Activated naive CD4-positive, alpha-beta T cell treated with anti-CD3 and anti-CD28 coated beads for 36 hours (primary cell): ENCODE measurements at regions of chrX and their contacts with region 1.

Region 1: GRCh38 chrX:107627838-107628661 is at the start of gene PRPS1:
- DNase-seq: peak; percentile 94
- H3K4me3 Mint-ChIP-seq: peak within 1 kb of the TSS; percentile 91
- H3K27ac Mint-ChIP-seq: peak within 1 kb of the TSS; percentile 95
- H3K4me1 Mint-ChIP-seq: peaks cover 26% of the 10 kb centered on the region
- H3K27me3 Mint-ChIP-seq: no peaks in the 10 kb centered on the region
- total RNA-seq, gene PRPS1: 195 to 196 TPM

Region 2: DNA sequence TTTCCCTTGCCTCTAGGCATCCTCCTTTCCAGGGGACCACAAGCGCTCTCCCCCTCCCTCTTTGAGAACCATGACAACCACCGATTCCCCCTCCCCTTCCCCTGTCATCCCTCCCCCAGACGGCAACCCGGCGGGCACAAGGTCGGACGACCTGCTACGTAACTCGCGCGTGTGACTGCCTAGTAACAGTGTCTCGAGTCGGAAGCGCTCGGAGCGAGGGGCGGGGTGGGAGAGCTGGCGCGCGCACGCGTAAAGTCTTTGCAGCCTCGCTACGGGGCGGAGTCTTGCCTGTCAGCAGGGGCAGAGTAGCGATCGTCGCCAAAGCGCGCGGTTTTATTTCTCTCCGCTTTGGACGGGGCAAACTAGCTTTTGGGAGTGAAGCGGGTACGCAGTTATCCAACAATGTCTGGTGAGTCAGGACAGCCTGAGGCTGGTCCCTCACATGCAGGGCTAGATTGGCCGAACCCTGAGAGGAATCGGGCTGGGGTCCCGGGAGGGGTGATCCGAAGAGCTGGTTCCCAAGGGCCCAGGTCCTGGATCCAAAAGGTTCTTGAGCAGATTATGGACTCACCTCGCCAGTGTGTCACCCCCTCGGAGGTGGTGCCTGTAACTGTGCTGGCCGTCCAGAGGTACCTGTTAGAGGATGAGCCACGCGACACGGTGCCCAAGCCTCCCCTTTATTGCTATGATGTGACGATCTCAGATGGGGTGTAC is 1016.2 kb before region 1 on chrX and contains the start of gene RADX:
- CTCF ChIA-PET with region 1: no interaction called
- intact Hi-C with region 1: loop called (anchors 5 kb)
- DNase-seq: peak; percentile 89
- H3K4me3 Mint-ChIP-seq: peak within 1 kb of the TSS; percentile 87
- H3K27ac Mint-ChIP-seq: peak within 1 kb of the TSS; percentile 85
- H3K4me1 Mint-ChIP-seq: peaks cover 14% of the 10 kb centered on the region
- H3K27me3 Mint-ChIP-seq: no peaks in the 10 kb centered on the region
- total RNA-seq, gene RADX: 13.1 to 14.8 TPM

Region 3: DNA sequence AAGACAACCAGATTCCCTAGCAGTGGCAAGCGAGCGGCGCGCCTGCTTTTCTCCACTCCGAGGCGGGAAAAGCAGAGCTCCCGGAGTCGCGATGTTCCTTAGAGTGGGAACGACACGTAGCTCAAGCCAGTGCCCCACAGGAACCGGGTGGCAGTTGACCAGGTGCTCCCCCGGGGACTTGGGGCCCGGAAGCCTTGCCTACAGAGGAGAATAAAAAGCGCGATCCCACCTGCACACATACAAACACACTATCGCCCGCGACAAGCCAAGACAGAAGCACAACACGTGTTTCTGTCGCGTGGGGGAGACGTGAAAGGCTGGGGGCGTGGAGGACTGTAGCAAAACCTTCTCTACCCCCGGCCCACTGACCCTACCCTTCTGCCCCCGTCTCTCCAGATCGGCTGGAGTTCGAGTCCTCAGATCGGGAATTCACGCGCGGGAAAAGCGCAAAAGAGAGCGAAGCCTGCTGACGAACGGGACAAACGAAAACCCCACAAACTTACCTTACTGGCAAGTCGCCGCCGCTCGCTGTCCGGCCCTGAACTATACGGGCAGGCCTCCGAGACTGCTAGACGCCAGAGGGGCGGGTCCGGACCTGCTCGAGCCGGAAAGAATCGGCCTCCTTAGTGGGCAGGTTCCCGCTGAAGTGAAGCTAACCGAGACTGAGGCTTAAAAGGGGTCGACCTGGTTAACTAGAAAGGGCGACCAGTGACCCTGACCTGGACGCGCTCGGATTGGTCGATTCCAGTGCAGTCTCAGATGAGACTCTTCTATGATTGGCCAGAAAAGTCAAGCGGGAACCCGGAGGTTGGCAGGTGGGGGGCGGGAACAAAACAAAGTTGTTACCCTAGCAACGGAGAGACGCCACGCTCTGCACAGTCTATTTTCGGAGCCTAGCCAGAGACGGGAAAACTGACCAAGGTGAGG is 422.0 kb before region 1 on chrX and contains the starts of genes DNAAF6 and NUP62CL:
- CTCF ChIA-PET with region 1: no interaction called
- intact Hi-C with region 1: loop called (anchors 1 kb)
- DNase-seq: peak; percentile 77
- H3K4me3 Mint-ChIP-seq: peak within 1 kb of the TSS; percentile 85
- H3K27ac Mint-ChIP-seq: no peak within 1 kb of the TSS
- H3K4me1 Mint-ChIP-seq: peaks cover 2% of the 10 kb centered on the region
- H3K27me3 Mint-ChIP-seq: peaks cover 2% of the 10 kb centered on the region
- total RNA-seq, gene DNAAF6: not detected
- total RNA-seq, gene NUP62CL: 3.6 TPM

Region 4: GRCh38 chrX:107348051-107348450 is 280.0 kb before region 1 on chrX:
- CTCF ChIA-PET with region 1: no interaction called
- intact Hi-C with region 1: no loop called
- DNase-seq: no peak
- H3K4me3 Mint-ChIP-seq: no peak overlapping the region
- H3K27ac Mint-ChIP-seq: no peak overlapping the region
- H3K4me1 Mint-ChIP-seq: no peaks in the 10 kb centered on the region
- H3K27me3 Mint-ChIP-seq: peaks cover 3% of the 10 kb centered on the region

Region 5: GRCh38 chrX:107372492-107372891 is 255.6 kb before region 1 on chrX:
- CTCF ChIA-PET with region 1: no interaction called
- intact Hi-C with region 1: no loop called
- DNase-seq: no peak
- H3K4me3 Mint-ChIP-seq: no peak overlapping the region
- H3K27ac Mint-ChIP-seq: no peak overlapping the region
- H3K4me1 Mint-ChIP-seq: no peaks in the 10 kb centered on the region
- H3K27me3 Mint-ChIP-seq: no peaks in the 10 kb centered on the region

Region 6: GRCh38 chrX:107654872-107655761 is 27.1 kb after region 1 on chrX:
- CTCF ChIA-PET with region 1: interaction called, 8 read pairs
- intact Hi-C with region 1: loop called (anchors 1 kb)
- DNase-seq: peak; percentile 72
- H3K4me3 Mint-ChIP-seq: no peak overlapping the region
- H3K27ac Mint-ChIP-seq: no peak overlapping the region
- H3K4me1 Mint-ChIP-seq: peaks cover 15% of the 10 kb centered on the region
- H3K27me3 Mint-ChIP-seq: no peaks in the 10 kb centered on the region

Region 7: GRCh38 chrX:107716816-107717700 is 89.0 kb after region 1 on chrX:
- CTCF ChIA-PET with region 1: interaction called, 3 read pairs
- intact Hi-C with region 1: loop called (anchors 1 kb)
- DNase-seq: peak; percentile 87
- H3K4me3 Mint-ChIP-seq: peak overlapping the region; percentile 92
- H3K27ac Mint-ChIP-seq: peak overlapping the region; percentile 77
- H3K4me1 Mint-ChIP-seq: peaks cover 37% of the 10 kb centered on the region
- H3K27me3 Mint-ChIP-seq: no peaks in the 10 kb centered on the region

Region 8: DNA sequence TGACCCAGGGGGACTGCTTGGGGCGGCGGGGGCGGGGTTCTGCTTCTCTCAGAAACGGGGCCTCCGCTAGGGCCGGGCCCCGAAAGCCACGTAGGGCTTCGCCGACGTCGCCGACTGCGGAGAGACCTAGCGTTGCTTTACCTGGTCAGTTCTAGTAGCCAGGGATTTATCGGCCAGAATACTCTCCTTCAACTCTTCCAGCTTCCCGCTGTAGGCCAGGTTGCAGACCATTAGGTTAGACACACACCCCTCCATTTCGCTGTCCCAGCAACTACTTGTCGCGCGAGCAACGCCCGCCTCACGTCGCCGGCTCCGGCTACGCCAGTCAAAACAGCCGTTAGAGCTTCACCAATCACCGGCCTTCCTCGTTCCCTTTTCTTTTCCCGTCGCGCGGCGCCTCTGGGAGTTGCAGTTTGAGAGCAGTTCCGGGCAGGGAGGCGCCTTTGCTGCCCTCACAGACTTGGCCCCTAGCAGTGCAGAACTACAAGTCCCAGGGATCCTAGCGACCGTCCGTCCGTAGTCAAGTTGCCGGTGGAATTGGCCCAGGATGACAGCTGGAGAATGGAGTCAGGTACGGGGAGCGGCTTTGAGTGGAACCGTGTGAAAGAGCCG is 463.3 kb after region 1 on chrX and contains the starts of genes ATG4A and PSMD10:
- CTCF ChIA-PET with region 1: no interaction called
- intact Hi-C with region 1: loop called (anchors 1 kb)
- DNase-seq: peak; percentile 94
- H3K4me3 Mint-ChIP-seq: no peak within 1 kb of the TSS
- H3K27ac Mint-ChIP-seq: no peak within 1 kb of the TSS
- H3K4me1 Mint-ChIP-seq: peaks cover 19% of the 10 kb centered on the region
- H3K27me3 Mint-ChIP-seq: no peaks in the 10 kb centered on the region
- total RNA-seq, gene ATG4A: 8.2 to 8.6 TPM
- total RNA-seq, gene PSMD10: 54.6 to 58.8 TPM